ENCODE measurements at regions of chr6 and their contacts with region 1.

Region 1: DNA sequence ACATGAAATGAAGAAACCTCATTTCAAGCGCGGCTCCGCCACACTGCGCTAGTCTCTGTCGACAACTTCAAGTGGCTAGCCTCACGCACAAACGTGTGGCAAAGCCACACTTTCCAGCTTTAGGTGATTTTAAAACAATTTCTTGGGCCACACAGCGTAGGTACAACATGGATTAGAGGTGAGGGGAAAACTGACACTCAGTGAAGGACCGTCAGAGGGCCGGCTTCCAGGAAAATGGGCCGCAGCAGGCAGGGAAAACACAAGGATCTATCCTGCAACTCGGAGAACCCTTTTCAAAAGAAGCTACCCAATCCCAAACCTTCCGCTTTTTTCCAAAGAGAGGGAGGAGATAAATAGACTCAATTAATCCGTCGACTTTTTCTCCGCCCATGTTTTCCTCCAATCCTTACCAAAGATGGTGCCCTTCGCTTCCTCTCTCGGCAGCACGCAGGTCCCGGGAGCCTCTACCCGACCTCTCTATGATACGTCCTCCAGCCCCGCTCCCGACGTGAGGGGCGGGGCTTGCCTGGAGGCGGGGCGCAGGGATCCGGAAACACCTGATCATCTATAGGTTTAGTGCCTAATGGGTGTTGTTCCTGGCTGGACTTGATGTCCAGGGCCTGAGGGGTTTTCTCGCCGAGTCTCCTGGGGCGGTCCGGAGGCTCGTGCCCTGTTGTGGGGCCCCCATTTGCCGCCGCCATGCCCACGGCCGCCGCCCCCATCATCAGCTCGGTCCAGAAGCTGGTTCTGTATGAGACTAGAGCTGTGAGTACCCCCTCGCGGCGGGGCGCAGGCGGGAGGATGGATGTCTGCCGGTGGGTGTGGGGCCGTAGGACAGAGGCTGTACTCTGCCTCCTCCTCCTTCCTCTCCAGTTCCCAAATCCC is at the starts of genes AK9 and FIG4:
- DNase-seq: peak; percentile 95
- H3K4me3 ChIP-seq: peak within 1 kb of the TSS; percentile 54 to 89 (median 55)
- H3K27ac ChIP-seq: peak within 1 kb of the TSS; percentile 73
- H3K4me1 ChIP-seq: peaks cover 10% of the 10 kb centered on the region
- H3K27me3 ChIP-seq: no peaks in the 10 kb centered on the region
- CTCF ChIP-seq: peak; percentile 10 to 43
- POLR2A ChIP-seq: peak; percentile 63
- total RNA-seq, gene AK9: 3.2 and 4.0 TPM in 2 replicates
- total RNA-seq, gene FIG4: 11.5 and 12.2 TPM in 2 replicates

Region 2: GRCh38 chr6:109187399-109188114 is 503.4 kb before region 1 on chr6:
- CTCF ChIA-PET with region 1: no interaction called
- POLR2A ChIA-PET with region 1: no interaction called
- dilution Hi-C with region 1: no loop called
- intact Hi-C with region 1: loop called (anchors 10 kb)
- DNase-seq: peak; percentile 44
- H3K4me3 ChIP-seq: no peak overlapping the region
- H3K27ac ChIP-seq: no peak overlapping the region
- H3K4me1 ChIP-seq: no peaks in the 10 kb centered on the region
- H3K27me3 ChIP-seq: peaks cover 23 to 45% of the 10 kb centered on the region in 2 experiments
- CTCF ChIP-seq: peak; percentile 77 to 78
- POLR2A ChIP-seq: no peak

Region 3: DNA sequence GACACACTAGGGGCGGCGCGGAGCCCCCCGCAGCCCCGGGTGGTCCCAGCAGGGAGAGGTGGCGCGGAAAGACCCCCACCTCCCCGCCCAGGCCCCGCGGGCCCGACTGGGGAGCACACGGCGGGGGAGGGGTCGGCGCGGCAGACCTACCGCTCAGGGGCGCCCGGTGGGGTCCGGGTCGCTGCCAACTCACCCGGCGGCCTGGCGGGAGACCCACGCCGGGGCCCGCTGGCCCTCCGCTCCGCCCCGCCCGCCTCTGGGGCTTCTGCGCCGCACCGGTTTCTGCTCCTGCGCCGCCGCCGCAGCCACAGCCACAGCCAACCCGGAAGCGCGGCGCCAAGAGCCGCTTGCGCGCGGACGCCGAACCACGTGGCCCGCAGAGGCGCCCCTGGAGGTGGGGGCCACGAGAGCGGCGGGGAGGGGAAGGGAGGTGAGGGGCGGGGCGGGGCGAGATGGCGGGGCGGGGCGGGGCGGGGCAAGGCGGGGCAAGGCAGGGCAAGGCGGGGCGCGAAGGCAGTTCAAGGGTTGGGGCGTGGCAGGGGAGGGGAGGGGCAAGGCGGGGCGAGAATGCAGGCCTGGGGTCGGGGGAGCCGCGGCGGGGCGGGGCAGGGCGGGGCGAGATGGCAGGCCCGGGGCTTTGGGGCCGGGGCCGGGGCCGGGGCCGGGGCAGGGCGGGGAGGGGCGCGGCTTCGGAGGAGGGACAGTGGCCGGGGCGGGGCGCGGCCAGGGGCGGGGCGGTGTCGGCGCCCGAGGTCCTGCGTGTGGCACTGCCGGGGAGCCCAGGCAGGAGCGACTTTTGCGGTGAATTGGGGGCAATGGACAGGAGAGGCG is 207.9 kb before region 1 on chr6 and contains the start of gene ZBTB24:
- CTCF ChIA-PET with region 1: no interaction called
- POLR2A ChIA-PET with region 1: no interaction called
- dilution Hi-C with region 1: no loop called
- intact Hi-C with region 1: loop called (anchors 2 kb)
- DNase-seq: peak; percentile 79
- H3K4me3 ChIP-seq: peak within 1 kb of the TSS; percentile 55 to 95 (median 93)
- H3K27ac ChIP-seq: peak within 1 kb of the TSS; percentile 78
- H3K4me1 ChIP-seq: peaks cover 26% of the 10 kb centered on the region
- H3K27me3 ChIP-seq: peaks cover 8 to 13% of the 10 kb centered on the region in 2 experiments
- CTCF ChIP-seq: no peak
- POLR2A ChIP-seq: peak; percentile 70
- total RNA-seq, gene ZBTB24: 6.2 and 6.4 TPM in 2 replicates

Region 4: GRCh38 chr6:109526905-109527628 is 163.9 kb before region 1 on chr6:
- CTCF ChIA-PET with region 1: interaction called, 6 read pairs
- POLR2A ChIA-PET with region 1: no interaction called
- dilution Hi-C with region 1: no loop called
- intact Hi-C with region 1: loop called (anchors 1 kb)
- DNase-seq: peak; percentile 67
- H3K4me3 ChIP-seq: no peak overlapping the region
- H3K27ac ChIP-seq: no peak overlapping the region
- H3K4me1 ChIP-seq: no peaks in the 10 kb centered on the region
- H3K27me3 ChIP-seq: no peaks in the 10 kb centered on the region
- CTCF ChIP-seq: peak; percentile 45 to 60
- POLR2A ChIP-seq: no peak

Region 5: DNA sequence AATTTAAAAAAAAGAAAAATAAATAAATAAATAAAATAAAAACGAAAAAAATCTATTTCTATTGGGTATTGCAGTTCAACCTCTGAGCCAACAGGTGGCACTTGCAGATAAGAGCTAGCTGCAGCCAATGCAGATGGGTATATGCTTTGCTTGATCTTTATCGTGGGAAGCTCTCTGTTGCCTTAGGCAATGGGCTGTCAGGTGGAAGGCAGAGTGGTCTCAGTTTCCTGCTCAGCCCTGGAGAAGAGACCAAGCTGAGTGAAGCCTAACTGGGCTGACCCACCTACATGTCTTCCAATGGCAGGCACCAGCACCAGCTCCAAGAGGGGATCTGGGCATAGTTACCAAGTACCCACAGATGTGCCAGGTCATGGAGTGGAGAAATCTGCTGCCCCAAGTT is 95.0 kb before region 1 on chr6:
- CTCF ChIA-PET with region 1: interaction called, 31 read pairs
- POLR2A ChIA-PET with region 1: no interaction called
- dilution Hi-C with region 1: no loop called
- intact Hi-C with region 1: loop called (anchors 1 kb)
- DNase-seq: peak; percentile 50
- H3K4me3 ChIP-seq: no peak overlapping the region
- H3K27ac ChIP-seq: no peak overlapping the region
- H3K4me1 ChIP-seq: no peaks in the 10 kb centered on the region
- H3K27me3 ChIP-seq: no peaks in the 10 kb centered on the region
- CTCF ChIP-seq: peak in 1 of 2 donors; percentile 51
- POLR2A ChIP-seq: no peak

Region 6: DNA sequence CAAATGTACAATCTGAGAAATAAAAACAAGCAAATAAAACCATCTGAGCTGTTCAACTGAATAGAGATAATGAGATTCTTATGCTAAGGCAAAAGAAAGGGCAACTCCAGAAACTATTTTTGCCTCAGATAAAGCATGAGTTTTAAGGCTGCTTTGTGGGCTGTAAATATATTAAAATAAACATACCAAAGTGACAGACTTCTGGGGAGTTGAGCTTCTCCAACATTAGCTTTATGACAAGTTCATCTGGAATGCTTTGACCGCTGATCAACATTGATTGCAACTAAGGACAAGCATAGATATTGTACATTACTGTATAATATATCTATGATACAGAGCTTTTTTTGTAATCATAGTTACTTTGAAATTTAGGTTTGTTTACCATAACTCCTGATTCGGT is 19.2 kb before region 1 on chr6:
- CTCF ChIA-PET with region 1: interaction called, 4 read pairs
- POLR2A ChIA-PET with region 1: no interaction called
- dilution Hi-C with region 1: no loop called
- intact Hi-C with region 1: loop called (anchors 1 kb)
- DNase-seq: peak; percentile 29
- H3K4me3 ChIP-seq: no peak overlapping the region
- H3K27ac ChIP-seq: peak overlapping the region; percentile 90
- H3K4me1 ChIP-seq: peaks cover 40% of the 10 kb centered on the region
- H3K27me3 ChIP-seq: no peaks in the 10 kb centered on the region
- CTCF ChIP-seq: no peak
- POLR2A ChIP-seq: peak; percentile 17

Region 7: DNA sequence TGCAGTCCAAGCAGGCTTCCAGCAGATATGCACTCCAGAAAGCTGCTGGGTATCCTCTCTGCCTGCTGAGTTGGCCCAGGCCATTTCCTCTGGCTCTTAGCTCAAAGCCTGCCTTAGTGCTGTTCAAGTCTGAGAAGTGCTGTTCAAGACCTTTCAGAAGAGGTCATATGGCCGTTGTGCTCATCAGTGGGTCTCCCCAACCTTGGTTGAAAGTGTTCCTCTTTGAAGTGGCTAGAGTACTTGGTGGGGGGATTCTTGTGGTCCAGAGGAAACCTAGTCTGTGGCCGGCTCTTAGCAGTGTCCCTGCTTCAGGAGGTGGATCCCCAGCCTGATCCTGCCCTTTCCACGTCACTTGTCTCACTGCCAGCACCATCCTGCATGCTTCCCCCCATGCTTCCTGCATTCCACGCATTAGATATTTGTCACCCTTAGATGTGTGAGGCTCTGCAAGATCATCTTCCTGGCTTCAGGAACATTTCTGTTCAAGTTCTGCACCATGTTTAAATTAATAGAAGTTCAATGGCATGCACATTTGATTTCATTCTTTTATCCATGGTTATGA is 105.1 kb after region 1 on chr6:
- CTCF ChIA-PET with region 1: no interaction called
- POLR2A ChIA-PET with region 1: no interaction called
- dilution Hi-C with region 1: no loop called
- intact Hi-C with region 1: no loop called
- DNase-seq: peak; percentile 52
- H3K4me3 ChIP-seq: no peak overlapping the region
- H3K27ac ChIP-seq: peak overlapping the region; percentile 20
- H3K4me1 ChIP-seq: peaks cover 27% of the 10 kb centered on the region
- H3K27me3 ChIP-seq: no peaks in the 10 kb centered on the region
- CTCF ChIP-seq: no peak
- POLR2A ChIP-seq: no peak

Region 8: GRCh38 chr6:110179401-110180227 is 488.6 kb after region 1 on chr6 and contains the start of gene WASF1:
- CTCF ChIA-PET with region 1: no interaction called
- POLR2A ChIA-PET with region 1: no interaction called
- dilution Hi-C with region 1: no loop called
- intact Hi-C with region 1: loop called (anchors 1 kb)
- DNase-seq: peak; percentile 99
- H3K4me3 ChIP-seq: peak within 1 kb of the TSS; percentile 61 to 94 (median 92)
- H3K27ac ChIP-seq: peak within 1 kb of the TSS; percentile 87
- H3K4me1 ChIP-seq: peaks cover 30% of the 10 kb centered on the region
- H3K27me3 ChIP-seq: no peaks in the 10 kb centered on the region
- CTCF ChIP-seq: no peak
- POLR2A ChIP-seq: peak; percentile 63
- total RNA-seq, gene WASF1: 20.9 and 23.2 TPM in 2 replicates

Measured in endothelial cell of umbilical vein (primary cell).